Mucosa of descending colon (tissue), 3 donors: ENCODE measurements at regions of chr3 and their contacts with region 1.

Region 1: DNA sequence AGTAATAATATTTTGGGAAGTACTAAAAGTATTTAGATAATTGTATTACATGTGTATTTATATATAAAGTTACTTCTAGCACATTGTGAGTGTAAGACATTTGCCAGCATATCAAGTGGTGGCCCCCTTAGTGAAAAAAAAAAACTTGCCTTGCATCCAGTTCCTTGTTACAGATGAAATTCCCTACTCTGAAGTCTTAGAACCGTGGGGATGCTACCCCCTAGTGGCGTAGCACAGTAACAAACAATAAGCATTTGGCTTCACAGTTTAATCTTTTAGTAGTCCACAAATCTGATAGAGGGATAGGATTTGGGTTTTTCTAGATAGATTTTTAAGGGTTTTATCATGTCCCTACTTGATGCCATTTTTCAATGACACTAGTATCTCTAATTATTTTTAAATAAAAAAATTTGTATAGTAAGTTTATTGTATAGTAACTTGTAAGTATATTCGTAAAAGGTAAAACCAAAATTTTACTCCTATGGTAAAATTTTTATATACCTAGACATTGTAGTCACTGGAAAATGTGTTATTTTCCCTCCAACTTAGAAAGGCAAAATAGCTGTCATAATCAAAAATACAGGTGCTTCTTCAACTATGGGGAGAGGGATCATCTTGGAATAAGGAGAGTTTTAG is 14.3 kb downstream of the SMC4 start:
- DNase-seq: peak in 1 of 3 donors; percentile 74
- ATAC-seq: peak; percentile 91
- H3K4me3 ChIP-seq: no peak overlapping the region
- H3K4me1 ChIP-seq: no peaks in the 10 kb centered on the region
- CTCF ChIP-seq: peak; percentile 74

Region 2: GRCh38 chr3:160038862-160039562 is 374.7 kb before region 1 on chr3:
- intact Hi-C with region 1: loop called (anchors 10 kb)
- DNase-seq: peak in 1 of 3 donors; percentile 54
- ATAC-seq: no peak
- H3K4me3 ChIP-seq: no peak overlapping the region
- H3K4me1 ChIP-seq: no peaks in the 10 kb centered on the region
- CTCF ChIP-seq: no peak

Region 3: DNA sequence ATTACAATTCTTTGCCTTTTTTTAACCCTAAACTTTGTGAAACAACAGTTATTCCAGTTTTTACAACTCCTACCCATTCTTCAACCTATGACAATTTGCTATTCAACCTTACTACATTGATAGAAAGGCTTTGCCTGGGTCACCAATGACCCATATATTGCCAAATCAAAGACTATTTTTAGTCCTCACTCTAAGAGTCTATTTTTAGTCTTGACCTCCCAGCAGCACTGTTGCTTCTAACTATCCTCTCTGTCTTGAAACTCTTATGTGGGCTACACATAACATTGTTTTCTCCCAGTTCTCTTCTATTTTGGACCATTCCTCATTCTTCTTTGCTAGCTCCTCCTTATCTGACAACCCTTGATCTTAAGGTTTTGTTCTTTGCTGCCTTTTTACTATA is 117.1 kb before region 1 on chr3:
- intact Hi-C with region 1: no loop called
- DNase-seq: no peak
- ATAC-seq: no peak
- H3K4me3 ChIP-seq: no peak overlapping the region
- H3K4me1 ChIP-seq: no peaks in the 10 kb centered on the region
- CTCF ChIP-seq: no peak